ENCODE measurements at regions of chr2 and their contacts with region 1.

Region 1: GRCh38 chr2:161063157-161063954 is 96.9 kb upstream of the TANK start:
- DNase-seq: peak; percentile 91
- H3K4me3 ChIP-seq: peak overlapping the region in 2 of 4 donors; percentile 2 to 16
- H3K27ac ChIP-seq: peak overlapping the region; percentile 2 to 42 (median 32)
- H3K4me1 ChIP-seq: peaks cover 0 to 9% (median 8%) of the 10 kb centered on the region in 4 donors
- H3K27me3 ChIP-seq: no peaks in the 10 kb centered on the region
- CTCF ChIP-seq: peak; percentile 62 to 89 (median 77)
- EP300 ChIP-seq: no peak
- POLR2A ChIP-seq: no peak

Region 2: GRCh38 chr2:159728629-159729028 is 1334.7 kb before region 1 on chr2:
- intact Hi-C with region 1: no loop called
- DNase-seq: no peak
- H3K4me3 ChIP-seq: no peak overlapping the region
- H3K27ac ChIP-seq: no peak overlapping the region
- H3K4me1 ChIP-seq: peaks cover 0 to 20% (median 9%) of the 10 kb centered on the region in 4 donors
- H3K27me3 ChIP-seq: no peaks in the 10 kb centered on the region
- CTCF ChIP-seq: no peak
- EP300 ChIP-seq: no peak
- POLR2A ChIP-seq: no peak

Region 3: DNA sequence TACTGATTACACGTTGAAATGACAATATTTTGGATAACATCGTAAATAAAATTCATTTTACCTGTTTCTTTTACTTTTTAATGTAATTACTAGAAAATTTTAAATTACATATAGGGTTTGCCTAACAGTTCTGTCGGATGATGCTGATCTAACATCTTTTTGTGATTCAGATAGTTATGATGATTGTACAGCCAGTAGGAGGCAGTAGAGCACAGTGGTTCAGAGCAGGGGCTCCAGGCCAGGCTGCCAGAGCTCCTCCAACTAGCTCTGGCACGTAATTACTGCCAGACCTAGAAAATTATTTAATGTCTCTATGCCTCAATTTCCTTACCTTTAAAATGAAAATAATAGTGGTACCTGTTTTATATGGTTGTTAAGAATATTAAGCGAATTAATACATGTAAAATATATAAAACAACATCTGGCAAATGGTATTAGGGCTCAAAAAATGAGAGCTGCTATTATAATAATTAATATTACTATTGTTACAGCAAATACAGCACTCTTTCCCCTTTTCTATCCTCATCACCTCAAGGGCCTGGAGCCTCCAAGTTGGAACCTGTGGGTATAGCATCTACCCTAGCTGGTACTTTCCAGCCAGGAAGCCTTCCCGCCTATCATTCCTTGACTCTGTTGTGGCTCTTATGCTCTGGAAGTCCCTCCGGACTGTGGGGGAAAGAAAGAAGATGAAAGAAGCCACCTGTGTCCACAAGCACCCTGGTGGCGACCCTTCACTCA is 953.3 kb before region 1 on chr2:
- intact Hi-C with region 1: loop called (anchors 2 kb)
- DNase-seq: peak; percentile 81
- H3K4me3 ChIP-seq: no peak overlapping the region
- H3K27ac ChIP-seq: no peak overlapping the region
- H3K4me1 ChIP-seq: peaks cover 0 to 5% (median 0%) of the 10 kb centered on the region in 4 donors
- H3K27me3 ChIP-seq: no peaks in the 10 kb centered on the region
- CTCF ChIP-seq: peak; percentile 63 to 81 (median 73)
- EP300 ChIP-seq: no peak
- POLR2A ChIP-seq: no peak

Region 4: GRCh38 chr2:160252278-160252887 is 811.0 kb before region 1 on chr2:
- intact Hi-C with region 1: loop called (anchors 5 kb)
- DNase-seq: no peak
- H3K4me3 ChIP-seq: no peak overlapping the region
- H3K27ac ChIP-seq: no peak overlapping the region
- H3K4me1 ChIP-seq: peaks cover 0 to 15% (median 8%) of the 10 kb centered on the region in 4 donors
- H3K27me3 ChIP-seq: no peaks in the 10 kb centered on the region
- CTCF ChIP-seq: peak; percentile 70 to 84 (median 80)
- EP300 ChIP-seq: no peak
- POLR2A ChIP-seq: no peak

Region 5: DNA sequence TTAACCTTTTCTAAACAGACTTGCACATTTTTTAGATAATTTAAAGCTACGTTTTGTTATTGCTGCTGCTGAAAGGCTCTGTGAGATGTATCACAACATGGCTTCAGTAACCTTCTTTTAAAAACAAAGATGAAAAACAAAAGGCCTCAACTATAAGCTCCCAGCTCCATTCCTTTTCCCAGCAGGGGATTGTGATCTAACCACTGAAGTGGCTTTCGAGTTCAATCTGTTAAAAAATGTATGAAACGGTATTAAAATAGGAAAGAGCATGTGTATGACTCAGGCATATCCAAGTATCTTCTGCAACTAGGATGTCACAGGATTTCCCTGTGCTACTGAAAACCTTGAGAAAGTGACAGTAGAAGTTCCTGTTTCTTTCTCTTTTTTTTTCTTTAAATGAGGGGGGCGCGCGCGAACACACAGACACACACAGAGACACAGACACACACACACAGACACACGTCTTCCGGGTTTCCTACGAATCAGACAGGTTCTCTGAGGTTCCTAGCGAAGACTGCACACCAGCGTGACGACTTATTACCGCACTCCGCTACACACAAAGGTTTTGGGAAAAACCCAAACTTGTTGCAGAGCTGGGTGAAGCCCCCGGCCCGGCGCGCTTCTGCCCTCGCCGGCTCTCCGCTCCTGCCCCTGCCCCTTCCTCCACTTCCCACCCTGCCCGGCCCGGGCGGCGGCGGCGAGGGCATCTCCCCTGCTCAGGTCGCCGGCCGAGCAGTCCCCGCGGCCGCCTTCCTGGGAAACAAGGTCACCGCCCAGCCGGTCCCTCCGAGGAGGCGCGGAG is 656.6 kb before region 1 on chr2:
- intact Hi-C with region 1: loop called (anchors 10 kb)
- DNase-seq: peak; percentile 80
- H3K4me3 ChIP-seq: peak overlapping the region; percentile 76 to 100 (median 96)
- H3K27ac ChIP-seq: peak overlapping the region; percentile 95 to 99 (median 98)
- H3K4me1 ChIP-seq: peaks cover 0 to 74% (median 63%) of the 10 kb centered on the region in 4 donors
- H3K27me3 ChIP-seq: no peaks in the 10 kb centered on the region
- CTCF ChIP-seq: no peak
- EP300 ChIP-seq: no peak
- POLR2A ChIP-seq: peak; percentile 26 to 46

Measured in sigmoid colon (tissue), 7 donors.